Transverse colon (tissue), 4 donors: ENCODE measurements at regions of chr14 and their contacts with region 1.

Region 1: GRCh38 chr14:70809543-70810244 is 381 bp upstream of the MAP3K9 start:
- DNase-seq: peak; percentile 97
- H3K4me3 ChIP-seq: peak overlapping the region in 3 of 4 donors; percentile 82 to 86 (median 84)
- H3K27ac ChIP-seq: peak overlapping the region; percentile 84 to 90 (median 86)
- H3K4me1 ChIP-seq: peaks cover 0 to 20% (median 11%) of the 10 kb centered on the region in 4 donors
- H3K27me3 ChIP-seq: peaks cover 25% of the 10 kb centered on the region
- CTCF ChIP-seq: no peak
- EP300 ChIP-seq: no peak
- POLR2A ChIP-seq: no peak

Region 2: DNA sequence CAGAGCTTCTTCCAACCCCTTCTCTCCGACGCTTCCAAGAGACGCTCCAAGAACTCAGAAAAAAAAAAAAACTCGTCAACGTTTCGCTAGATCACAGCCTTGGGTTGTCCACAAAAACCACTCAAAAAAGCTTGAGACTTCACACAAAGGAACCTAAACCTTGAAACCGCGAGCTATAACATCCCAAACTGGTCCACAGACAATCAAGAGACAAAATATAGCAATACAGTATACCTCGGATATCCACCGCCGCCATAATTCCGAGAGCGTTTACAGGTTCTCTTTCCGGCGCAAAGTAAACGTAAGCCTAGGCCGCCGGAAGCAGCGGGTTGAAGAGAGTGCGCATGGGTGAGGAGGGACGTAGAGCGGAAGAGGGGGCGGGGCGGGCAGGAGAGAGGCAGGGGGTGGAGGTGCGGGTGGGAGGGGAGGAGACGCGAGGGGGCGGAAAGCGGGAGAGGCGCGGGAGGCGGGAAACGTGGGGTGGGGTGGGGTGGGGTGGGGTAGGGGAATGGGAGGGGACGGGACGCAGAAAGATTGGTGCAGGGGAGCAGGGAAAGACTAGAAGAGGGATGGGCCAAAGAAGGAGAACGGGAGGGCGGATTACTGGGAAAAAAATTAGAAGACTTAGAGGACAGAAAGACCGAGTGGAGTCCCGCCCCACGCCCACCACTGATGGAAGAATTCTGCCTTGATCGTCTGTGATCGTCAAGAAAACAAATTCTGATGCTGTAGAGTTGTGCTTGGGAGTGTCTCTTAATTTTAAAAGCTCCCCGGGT is 209.1 kb before region 1 on chr14 and contains the start of gene MED6:
- in situ Hi-C with region 1: loop called in 2 of 4 experiments (anchors 25 kb)
- intact Hi-C with region 1: no loop called
- DNase-seq: peak; percentile 96
- H3K4me3 ChIP-seq: peak within 1 kb of the TSS; percentile 53 to 99 (median 92)
- H3K27ac ChIP-seq: peak within 1 kb of the TSS; percentile 61 to 88 (median 82)
- H3K4me1 ChIP-seq: peaks cover 7 to 18% (median 11%) of the 10 kb centered on the region in 4 donors
- H3K27me3 ChIP-seq: peaks cover 3% of the 10 kb centered on the region
- CTCF ChIP-seq: no peak
- EP300 ChIP-seq: no peak
- POLR2A ChIP-seq: peak; percentile 43
- total RNA-seq, gene MED6: 6.0 to 33.5 (median 23.7) TPM

Region 3: DNA sequence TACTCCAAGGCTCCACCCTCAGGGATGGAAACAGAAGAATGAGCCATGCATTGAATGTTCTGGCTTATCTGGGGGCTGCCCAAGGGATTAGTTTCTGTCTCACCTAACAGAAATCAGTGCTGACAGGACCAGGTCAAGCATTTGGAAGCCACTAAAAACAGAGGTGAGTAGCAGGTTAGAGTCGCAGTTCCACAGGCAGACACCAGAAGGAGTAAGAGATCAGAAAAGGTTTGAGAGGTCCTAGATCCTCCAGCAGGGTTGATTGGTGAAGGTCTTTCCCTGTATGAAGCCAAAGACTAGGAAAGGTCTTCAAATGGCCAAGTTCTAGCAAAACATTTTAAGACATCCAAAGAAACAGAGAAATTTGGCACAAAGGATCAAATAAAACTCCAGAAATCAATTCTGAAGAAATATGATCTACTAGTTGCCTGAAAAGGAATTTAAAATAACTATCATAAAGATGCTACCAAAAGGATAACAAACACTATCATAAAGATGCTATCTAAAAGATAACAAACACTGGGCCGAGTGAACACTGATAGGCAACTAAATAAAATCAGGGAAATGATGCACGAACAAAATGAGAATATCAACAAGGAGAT is 187.5 kb before region 1 on chr14:
- in situ Hi-C with region 1: loop called in 3 of 4 experiments (anchors 10 to 25 kb)
- intact Hi-C with region 1: no loop called
- DNase-seq: peak; percentile 52
- H3K4me3 ChIP-seq: no peak overlapping the region
- H3K27ac ChIP-seq: no peak overlapping the region
- H3K4me1 ChIP-seq: no peaks in the 10 kb centered on the region
- H3K27me3 ChIP-seq: no peaks in the 10 kb centered on the region
- CTCF ChIP-seq: peak; percentile 31 to 70 (median 62)
- EP300 ChIP-seq: no peak
- POLR2A ChIP-seq: no peak

Region 4: DNA sequence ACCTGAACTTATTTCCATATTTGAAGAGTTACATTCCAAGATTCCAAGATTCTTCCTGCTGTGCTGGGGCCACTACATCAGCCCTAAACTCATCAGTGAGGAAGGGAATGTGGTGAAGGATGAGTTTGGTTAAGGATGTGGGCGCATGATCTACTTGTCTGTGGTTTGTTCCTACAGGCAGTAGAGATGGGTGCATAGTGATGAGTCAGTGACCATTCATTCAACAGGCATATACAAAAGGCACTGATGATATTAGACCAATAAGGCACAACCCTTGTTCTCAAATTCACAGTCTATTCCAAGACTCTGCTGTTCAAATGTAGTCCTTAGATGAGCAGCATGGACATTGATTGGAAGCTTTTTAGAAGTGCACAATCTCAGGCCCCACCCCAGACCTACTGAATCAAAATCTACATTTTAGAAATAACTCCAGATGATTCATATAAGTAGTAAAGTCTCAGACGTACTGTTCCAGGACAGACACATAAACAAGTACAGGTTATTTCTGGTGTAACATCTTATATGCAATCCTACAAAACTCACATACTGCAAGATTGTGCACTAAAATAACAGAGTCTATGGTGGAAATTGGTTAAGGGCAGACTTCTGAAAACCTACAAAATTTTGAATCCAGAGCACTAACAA is 47.3 kb after region 1 on chr14:
- in situ Hi-C with region 1: no loop called
- intact Hi-C with region 1: no loop called
- DNase-seq: no peak
- H3K4me3 ChIP-seq: no peak overlapping the region
- H3K27ac ChIP-seq: no peak overlapping the region
- H3K4me1 ChIP-seq: no peaks in the 10 kb centered on the region
- H3K27me3 ChIP-seq: no peaks in the 10 kb centered on the region
- CTCF ChIP-seq: no peak
- EP300 ChIP-seq: no peak
- POLR2A ChIP-seq: no peak